ENCODE measurements at regions of chr2 and their contacts with region 1.

Region 1: DNA sequence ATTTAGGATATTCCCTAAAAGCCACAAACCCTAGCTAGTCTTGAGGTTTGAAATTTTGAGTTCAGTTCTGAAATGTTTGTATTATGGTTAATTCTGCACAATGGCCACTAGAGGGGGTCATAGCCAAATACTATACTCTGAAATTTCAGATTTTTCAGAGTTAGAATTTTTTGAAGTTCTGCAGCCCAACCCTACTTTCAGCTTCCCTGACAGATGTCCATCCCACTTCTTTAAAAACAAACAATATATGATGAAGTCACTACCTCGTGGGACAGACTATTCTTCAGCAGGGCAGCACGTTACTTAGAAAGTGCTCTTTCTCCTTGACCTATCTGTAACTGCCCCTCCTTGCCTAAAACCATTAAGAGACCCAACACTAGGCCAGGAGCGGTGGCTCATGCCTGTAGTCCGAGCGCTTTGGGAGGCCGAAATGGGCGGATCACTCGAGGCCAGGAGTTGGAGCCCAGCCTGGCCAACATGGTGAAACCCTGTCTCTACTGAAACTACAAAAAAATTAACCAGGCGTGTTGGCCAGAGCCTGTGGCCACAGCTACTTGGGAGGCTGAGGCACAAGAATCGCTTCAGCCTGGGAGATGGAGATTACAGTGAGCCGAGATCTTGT is 48.2 kb upstream of the PAPOLG start:
- DNase-seq: no peak
- H3K4me3 ChIP-seq: no peak overlapping the region
- H3K27ac ChIP-seq: no peak overlapping the region
- H3K4me1 ChIP-seq: no peaks in the 10 kb centered on the region
- H3K27me3 ChIP-seq: peaks cover 9% of the 10 kb centered on the region
- CTCF ChIP-seq: peak; percentile 78

Region 2: DNA sequence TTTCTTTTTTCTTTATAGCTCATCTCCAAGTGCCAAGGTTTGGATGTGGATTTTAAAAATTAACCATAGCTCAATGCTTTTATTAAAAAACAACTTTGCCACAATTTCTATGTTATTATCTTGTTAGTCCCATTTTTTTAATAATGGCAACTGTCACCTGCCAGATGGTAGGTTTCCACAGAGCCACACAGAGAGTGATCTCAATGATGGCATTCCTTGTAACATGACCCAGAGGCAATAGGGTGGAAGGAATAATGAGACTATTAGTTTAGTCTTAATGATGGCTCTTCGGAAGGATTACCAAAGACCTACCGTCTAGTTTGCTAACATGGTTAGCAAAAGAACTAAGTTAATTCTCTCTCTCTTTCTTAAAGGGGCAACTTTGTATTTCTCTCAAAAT is 237.5 kb after region 1 on chr2:
- intact Hi-C with region 1: no loop called
- DNase-seq: no peak
- H3K4me3 ChIP-seq: no peak overlapping the region
- H3K27ac ChIP-seq: no peak overlapping the region
- H3K4me1 ChIP-seq: no peaks in the 10 kb centered on the region
- H3K27me3 ChIP-seq: no peaks in the 10 kb centered on the region
- CTCF ChIP-seq: no peak

Region 3: DNA sequence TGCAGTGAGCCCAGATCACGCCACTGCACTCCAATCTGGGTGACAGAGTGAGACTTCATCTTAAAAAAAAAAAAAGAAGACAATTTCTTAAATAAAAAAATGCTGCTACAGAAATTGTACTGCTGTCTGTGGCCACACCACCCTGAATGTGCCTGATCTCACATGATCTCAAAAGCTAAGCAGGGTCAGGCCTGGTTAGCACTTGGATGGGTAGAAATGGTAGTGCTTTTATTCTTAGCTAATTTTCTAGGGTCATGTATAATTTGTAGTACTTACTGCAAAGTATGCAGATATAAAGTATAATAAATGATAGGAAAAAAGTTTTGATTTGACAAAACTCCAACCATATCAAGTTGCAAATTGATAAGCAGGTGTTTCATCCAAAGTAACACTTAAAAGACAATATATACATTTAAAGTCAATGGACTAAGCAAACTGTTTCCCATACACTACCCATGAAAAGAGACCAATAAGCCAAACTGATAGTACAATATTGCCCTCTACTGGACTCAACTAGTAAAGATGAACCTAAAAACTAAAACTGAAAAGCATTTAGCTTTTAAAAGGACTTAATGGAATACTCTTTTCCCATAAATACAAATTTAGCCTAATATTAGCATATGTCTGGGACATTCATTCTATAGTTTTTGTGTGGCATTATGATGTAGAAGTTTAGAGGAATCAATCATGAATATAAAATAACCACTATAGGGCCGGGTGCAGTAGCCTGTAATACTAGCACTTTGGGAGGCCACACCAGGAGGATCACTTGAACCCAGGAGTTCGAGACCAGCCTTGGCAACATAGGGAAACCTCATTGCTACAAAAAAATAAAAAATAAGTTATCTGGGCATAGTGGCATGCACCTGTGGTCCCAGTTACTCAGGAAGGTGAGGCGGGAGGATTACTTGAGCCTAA is 291.0 kb after region 1 on chr2:
- intact Hi-C with region 1: loop called (anchors 5 kb)
- DNase-seq: no peak
- H3K4me3 ChIP-seq: no peak overlapping the region
- H3K27ac ChIP-seq: no peak overlapping the region
- H3K4me1 ChIP-seq: peaks cover 9% of the 10 kb centered on the region
- H3K27me3 ChIP-seq: no peaks in the 10 kb centered on the region
- CTCF ChIP-seq: peak; percentile 74

Region 4: DNA sequence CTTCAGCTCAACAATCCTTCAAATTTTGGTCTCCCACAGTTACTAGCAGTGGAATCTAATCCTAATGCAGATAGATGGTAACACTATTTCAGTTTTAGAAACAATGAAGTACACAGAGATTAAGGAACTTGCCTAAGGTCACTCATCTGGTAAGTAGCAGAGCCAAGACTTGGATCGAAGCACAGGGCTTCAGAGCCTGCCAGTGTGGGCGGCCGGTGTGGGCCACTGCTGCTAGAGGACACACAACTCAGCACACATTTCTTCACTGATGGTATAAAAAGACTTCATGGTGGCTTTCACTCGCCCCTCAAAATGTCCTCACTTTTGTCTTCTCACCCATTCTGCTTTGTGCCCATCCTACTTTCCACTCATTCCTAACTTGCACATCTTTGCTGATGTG is 465.3 kb after region 1 on chr2:
- intact Hi-C with region 1: no loop called
- DNase-seq: no peak
- H3K4me3 ChIP-seq: no peak overlapping the region
- H3K27ac ChIP-seq: peak overlapping the region; percentile 14
- H3K4me1 ChIP-seq: peaks cover 24% of the 10 kb centered on the region
- H3K27me3 ChIP-seq: no peaks in the 10 kb centered on the region
- CTCF ChIP-seq: no peak

Measured in left ventricle myocardium inferior (tissue), 1 donor.